Mammary epithelial cell (primary cell): ENCODE measurements at regions of chr16 and their contacts with region 1.

Region 1: GRCh38 chr16:1863681-1864460 is 8.1 kb downstream of the MEIOB start:
- DNase-seq: no peak
- H3K4me3 ChIP-seq: no peak overlapping the region
- H3K27ac ChIP-seq: no peak overlapping the region
- H3K4me1 ChIP-seq: peaks cover 3% of the 10 kb centered on the region
- H3K27me3 ChIP-seq: no peaks in the 10 kb centered on the region
- CTCF ChIP-seq: peak; percentile 50

Region 2: GRCh38 chr16:1713933-1714332 is 149.9 kb before region 1 on chr16:
- CTCF ChIA-PET with region 1: no interaction called
- dilution Hi-C with region 1: no loop called
- in situ Hi-C with region 1: no loop called
- intact Hi-C with region 1: no loop called
- DNase-seq: no peak
- H3K4me3 ChIP-seq: no peak overlapping the region
- H3K27ac ChIP-seq: no peak overlapping the region
- H3K4me1 ChIP-seq: no peaks in the 10 kb centered on the region
- H3K27me3 ChIP-seq: no peaks in the 10 kb centered on the region
- CTCF ChIP-seq: no peak

Region 3: DNA sequence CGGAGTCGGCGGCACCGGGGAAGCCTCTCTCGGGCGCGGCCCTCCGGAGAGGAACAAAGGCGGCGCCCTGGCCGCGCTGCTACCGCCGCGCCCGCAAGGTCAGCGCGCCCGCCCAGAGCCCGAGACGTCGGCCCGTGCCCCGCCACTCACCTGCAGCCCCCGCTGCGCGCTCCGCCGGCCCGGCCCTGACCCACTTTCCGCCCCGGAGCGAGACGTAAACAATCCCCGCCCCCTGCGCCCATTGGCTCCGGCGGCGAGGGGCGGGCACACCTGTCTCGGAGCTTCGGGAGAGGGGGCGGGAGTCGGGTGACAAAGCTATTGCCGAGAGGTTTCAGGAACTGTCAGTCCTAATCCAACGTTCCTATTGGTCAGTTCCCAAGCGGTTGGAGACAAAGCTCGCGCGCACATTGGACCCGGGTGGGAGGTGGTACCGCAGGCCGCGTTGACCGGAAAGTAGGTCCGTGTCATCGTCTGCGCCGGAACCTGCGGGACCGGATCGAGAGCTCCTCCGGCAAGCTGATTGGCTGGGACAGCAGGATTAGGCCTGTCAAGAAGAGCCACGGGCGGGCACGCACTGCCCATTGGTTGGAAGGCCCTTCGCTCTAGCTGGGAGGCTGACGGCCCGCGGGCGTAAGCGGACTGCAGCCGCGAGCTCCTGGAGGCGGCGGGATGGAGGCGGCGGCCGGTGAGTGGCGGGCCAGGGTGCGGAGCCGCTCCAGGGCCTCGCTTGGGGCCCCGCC is 81.3 kb before region 1 on chr16 and contains the starts of genes NUBP2 and SPSB3:
- CTCF ChIA-PET with region 1: no interaction called
- dilution Hi-C with region 1: loop called (anchors 5 kb)
- in situ Hi-C with region 1: no loop called
- intact Hi-C with region 1: no loop called
- DNase-seq: peak; percentile 100
- H3K4me3 ChIP-seq: peak within 1 kb of the TSS; percentile 82 to 90 (median 83)
- H3K27ac ChIP-seq: peak within 1 kb of the TSS; percentile 47
- H3K4me1 ChIP-seq: peaks cover 30% of the 10 kb centered on the region
- H3K27me3 ChIP-seq: no peaks in the 10 kb centered on the region
- CTCF ChIP-seq: no peak
- total RNA-seq, gene NUBP2: 64.3 to 67.0 TPM
- total RNA-seq, gene SPSB3: 20.9 to 43.0 TPM

Region 4: GRCh38 chr16:1812732-1813163 is 51.1 kb before region 1 on chr16:
- CTCF ChIA-PET with region 1: no interaction called
- dilution Hi-C with region 1: loop called (anchors 5 kb)
- in situ Hi-C with region 1: no loop called
- intact Hi-C with region 1: no loop called
- DNase-seq: peak; percentile 50
- H3K4me3 ChIP-seq: no peak overlapping the region
- H3K27ac ChIP-seq: no peak overlapping the region
- H3K4me1 ChIP-seq: peaks cover 4% of the 10 kb centered on the region
- H3K27me3 ChIP-seq: no peaks in the 10 kb centered on the region
- CTCF ChIP-seq: peak; percentile 33 to 83

Region 5: GRCh38 chr16:2147981-2148671 is 284.3 kb after region 1 on chr16 and contains the start of gene RAB26:
- CTCF ChIA-PET with region 1: no interaction called
- dilution Hi-C with region 1: no loop called
- in situ Hi-C with region 1: no loop called
- intact Hi-C with region 1: loop called (anchors 5 kb)
- DNase-seq: peak; percentile 70
- H3K4me3 ChIP-seq: peak within 1 kb of the TSS in 2 of 3 experiments; percentile 32 to 36
- H3K27ac ChIP-seq: no peak within 1 kb of the TSS
- H3K4me1 ChIP-seq: peaks cover 58% of the 10 kb centered on the region
- H3K27me3 ChIP-seq: no peaks in the 10 kb centered on the region
- CTCF ChIP-seq: no peak
- total RNA-seq, gene RAB26: 0.33 to 1.0 TPM